ENCODE measurements at regions of chr12 and their contacts with region 1.

Region 1: GRCh38 chr12:1583421-1584078 is 10.8 kb downstream of the FBXL14 start:
- DNase-seq: peak; percentile 86
- H3K4me3 ChIP-seq: peak overlapping the region; percentile 30; the same call in 1 of the 2 replicates
- H3K27ac ChIP-seq: no peak overlapping the region
- H3K27me3 ChIP-seq: no peaks in the 10 kb centered on the region
- CTCF ChIP-seq: peak; percentile 90

Region 2: GRCh38 chr12:1594261-1595025 is 10.9 kb after region 1 on chr12 and contains the start of gene FBXL14:
- CTCF ChIA-PET with region 1: interaction called, 14 read pairs
- POLR2A ChIA-PET with region 1: no interaction called
- DNase-seq: no peak
- H3K4me3 ChIP-seq: peak within 1 kb of the TSS; percentile 74
- H3K27ac ChIP-seq: peak within 1 kb of the TSS; percentile 79
- H3K27me3 ChIP-seq: no peaks in the 10 kb centered on the region
- CTCF ChIP-seq: no peak
- polyA plus RNA-seq, gene FBXL14: 3.2 and 4.8 TPM in 2 replicates

Region 3: GRCh38 chr12:1634590-1635191 is 51.1 kb after region 1 on chr12:
- CTCF ChIA-PET with region 1: no interaction called
- POLR2A ChIA-PET with region 1: no interaction called
- DNase-seq: peak; percentile 49
- H3K4me3 ChIP-seq: no peak overlapping the region
- H3K27ac ChIP-seq: no peak overlapping the region
- H3K27me3 ChIP-seq: no peaks in the 10 kb centered on the region
- CTCF ChIP-seq: peak; percentile 92

Region 4: DNA sequence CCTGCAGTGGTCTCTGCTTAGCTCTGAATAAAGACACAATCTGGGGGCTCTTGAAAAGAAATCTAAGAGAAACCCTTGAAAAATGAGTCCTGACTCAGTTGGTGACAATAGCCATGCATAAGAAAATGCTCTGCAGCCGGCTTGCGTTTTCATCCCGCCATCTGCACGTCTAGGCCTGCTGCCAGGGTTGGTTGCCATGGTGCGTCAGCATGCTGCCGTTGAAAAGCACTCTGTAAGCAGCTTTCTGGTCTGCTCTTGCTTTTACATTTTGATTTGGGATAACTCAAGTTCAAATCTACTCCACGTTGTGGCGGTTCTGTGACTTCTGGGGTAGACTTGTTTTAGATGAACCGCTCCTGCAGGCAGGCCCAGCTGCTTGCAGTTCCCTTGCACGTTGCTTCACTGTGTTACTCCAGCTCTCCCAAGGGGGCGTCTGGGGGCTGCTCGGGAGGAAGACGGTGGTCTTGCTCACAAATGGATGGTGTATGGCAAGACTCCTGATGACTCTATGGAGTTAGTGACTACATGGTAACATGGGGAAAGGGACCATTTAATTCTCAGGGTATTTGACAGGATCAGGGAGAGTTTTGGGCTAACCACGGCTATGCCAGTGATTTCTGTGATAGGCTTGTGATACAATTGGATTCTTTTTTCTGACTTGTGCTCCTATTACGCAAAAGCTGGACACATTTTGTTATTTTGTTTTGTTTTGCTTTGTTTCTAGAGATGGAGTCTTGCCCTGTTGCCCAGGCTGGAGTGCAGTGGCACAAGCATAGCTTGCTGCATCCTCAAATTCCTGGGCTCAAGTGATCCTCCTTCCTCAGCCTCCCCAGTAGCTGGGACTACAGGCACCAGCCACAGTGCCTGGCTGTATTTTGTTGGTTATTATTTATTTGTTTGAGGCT is 61.2 kb after region 1 on chr12:
- CTCF ChIA-PET with region 1: no interaction called
- POLR2A ChIA-PET with region 1: no interaction called
- DNase-seq: peak; percentile 55
- H3K4me3 ChIP-seq: 0 out of 2 replicates have a peak overlapping the region, but pooled peaks have one; percentile 17
- H3K27ac ChIP-seq: no peak overlapping the region
- H3K27me3 ChIP-seq: no peaks in the 10 kb centered on the region
- CTCF ChIP-seq: no peak

Region 5: GRCh38 chr12:1820191-1820895 is 236.8 kb after region 1 on chr12 and contains the start of gene LRTM2:
- CTCF ChIA-PET with region 1: no interaction called
- POLR2A ChIA-PET with region 1: no interaction called
- DNase-seq: no peak
- H3K4me3 ChIP-seq: no peak within 1 kb of the TSS
- H3K27ac ChIP-seq: no peak within 1 kb of the TSS
- H3K27me3 ChIP-seq: peaks cover 80% of the 10 kb centered on the region
- CTCF ChIP-seq: no peak
- polyA plus RNA-seq, gene LRTM2: not detected in 2 replicates

Measured in AG04450 (cell line).